MCF 10A (cell line): ENCODE measurements at regions of chr14 and their contacts with region 1.

Region 1: DNA sequence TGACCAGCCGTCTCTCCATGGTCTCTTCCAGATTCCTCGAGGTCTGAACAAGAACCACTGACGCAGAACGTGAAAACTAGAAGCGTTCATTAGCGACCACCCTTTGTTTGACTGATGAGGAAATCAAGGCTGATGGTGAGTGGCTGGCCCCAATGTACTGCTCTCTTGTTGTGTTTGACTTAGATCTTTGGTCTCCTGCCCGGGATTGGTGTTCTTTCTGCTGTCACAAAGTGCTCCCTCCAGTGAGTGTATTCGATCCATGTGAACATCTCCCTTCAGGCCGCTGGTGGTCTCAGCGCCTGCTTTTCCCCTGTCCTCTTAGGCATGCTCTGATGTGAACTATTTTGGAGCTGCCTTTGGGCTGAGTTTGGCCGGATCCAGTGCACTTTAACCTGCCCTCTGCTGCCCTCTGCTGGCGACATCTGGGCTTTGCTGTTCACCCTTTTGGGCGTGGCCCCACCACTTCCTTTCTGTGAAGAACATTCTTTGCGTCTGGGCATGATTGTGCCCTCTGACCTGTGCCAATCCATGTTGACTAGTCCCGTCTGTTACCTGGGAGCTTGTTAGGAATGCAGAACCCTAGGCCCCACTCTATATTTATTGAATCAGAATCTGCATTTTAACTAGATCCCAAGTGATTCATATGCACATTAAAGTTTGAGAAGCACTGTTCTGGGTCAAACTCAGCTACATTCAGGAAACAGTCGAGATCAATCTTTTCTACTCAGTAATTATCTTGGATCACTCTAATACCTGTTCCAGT is 279.2 kb downstream of the TTC6 start:
- DNase-seq: peak; percentile 83
- H3K4me3 Mint-ChIP-seq: no peak overlapping the region
- H3K27ac Mint-ChIP-seq: no peak overlapping the region
- H3K4me1 Mint-ChIP-seq: peaks cover 22% of the 10 kb centered on the region
- H3K27me3 Mint-ChIP-seq: no peaks in the 10 kb centered on the region
- CTCF ChIP-seq: peak; percentile 77

Region 2: DNA sequence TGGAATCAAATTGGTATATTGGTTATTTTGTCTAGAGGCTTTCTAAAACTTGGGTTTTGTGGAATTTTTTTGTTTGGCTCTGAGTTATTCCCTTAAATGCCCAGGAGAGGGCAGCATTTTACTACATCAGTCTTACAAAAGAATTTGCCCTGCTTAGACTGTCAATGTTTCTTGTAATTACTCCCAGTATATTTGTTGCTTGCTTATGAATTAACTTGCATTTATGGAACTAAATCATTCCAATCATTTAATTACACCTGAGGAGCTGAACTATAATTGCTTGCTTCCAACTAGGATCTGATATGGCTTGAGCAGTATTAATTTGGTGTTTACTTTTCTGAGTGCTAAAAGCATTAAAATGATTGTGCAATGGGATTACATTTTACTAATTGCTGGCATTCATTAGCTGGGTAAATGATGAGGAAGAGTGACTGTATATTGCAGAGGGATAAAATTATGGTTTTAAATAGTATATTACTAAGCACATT is 628.1 kb before region 1 on chr14:
- CTCF ChIA-PET with region 1: interaction called, 35 read pairs
- POLR2A ChIA-PET with region 1: interaction called, 3 read pairs
- intact Hi-C with region 1: loop called (anchors 1 kb)
- DNase-seq: peak; percentile 64
- H3K4me3 Mint-ChIP-seq: no peak overlapping the region
- H3K27ac Mint-ChIP-seq: no peak overlapping the region
- H3K4me1 Mint-ChIP-seq: no peaks in the 10 kb centered on the region
- H3K27me3 Mint-ChIP-seq: no peaks in the 10 kb centered on the region
- CTCF ChIP-seq: peak; percentile 63

Region 3: DNA sequence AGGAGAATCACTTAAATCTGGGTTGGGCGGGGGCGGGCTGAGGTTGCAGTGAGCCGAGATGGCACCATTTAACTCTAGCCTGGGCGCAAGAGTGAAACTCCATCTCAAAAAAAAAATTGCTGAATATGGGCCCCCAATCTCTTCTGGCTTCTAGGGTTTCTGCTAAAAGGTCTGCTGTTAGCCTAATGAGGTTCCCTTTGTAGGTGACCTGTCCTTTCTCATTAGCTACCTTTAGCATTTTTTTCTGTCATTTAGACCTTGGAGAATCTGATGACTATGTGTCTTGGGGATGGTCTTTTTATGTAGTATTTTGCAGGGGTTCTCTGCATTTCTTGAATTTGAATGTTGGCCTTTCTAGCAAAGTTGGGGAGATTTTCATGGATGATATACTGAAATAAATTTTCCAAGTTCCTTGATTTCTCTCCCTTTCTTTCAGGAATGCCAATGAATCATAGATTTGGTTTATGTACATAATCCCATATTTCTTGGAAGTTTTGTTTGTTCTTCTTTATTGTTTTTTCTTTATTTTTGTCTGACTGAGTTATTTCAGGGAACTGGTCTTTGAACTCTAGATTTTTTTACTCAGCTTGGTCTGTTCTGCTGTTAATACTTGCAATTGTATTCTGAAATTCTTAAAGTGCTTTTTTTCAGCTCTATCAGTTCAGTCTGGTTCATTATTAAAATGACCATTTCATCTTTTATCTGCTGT is 97.7 kb before region 1 on chr14:
- CTCF ChIA-PET with region 1: no interaction called
- POLR2A ChIA-PET with region 1: no interaction called
- intact Hi-C with region 1: no loop called
- DNase-seq: no peak
- H3K4me3 Mint-ChIP-seq: no peak overlapping the region
- H3K27ac Mint-ChIP-seq: no peak overlapping the region
- H3K4me1 Mint-ChIP-seq: no peaks in the 10 kb centered on the region
- H3K27me3 Mint-ChIP-seq: no peaks in the 10 kb centered on the region
- CTCF ChIP-seq: no peak

Region 4: GRCh38 chr14:37890095-37890494 is 15.5 kb after region 1 on chr14:
- CTCF ChIA-PET with region 1: interaction called, 14 read pairs
- POLR2A ChIA-PET with region 1: no interaction called
- intact Hi-C with region 1: no loop called
- DNase-seq: no peak
- H3K4me3 Mint-ChIP-seq: no peak overlapping the region
- H3K27ac Mint-ChIP-seq: no peak overlapping the region
- H3K4me1 Mint-ChIP-seq: no peaks in the 10 kb centered on the region
- H3K27me3 Mint-ChIP-seq: no peaks in the 10 kb centered on the region
- CTCF ChIP-seq: no peak

Region 5: GRCh38 chr14:38125481-38126037 is 250.9 kb after region 1 on chr14:
- CTCF ChIA-PET with region 1: no interaction called
- POLR2A ChIA-PET with region 1: no interaction called
- intact Hi-C with region 1: no loop called
- DNase-seq: no peak
- H3K4me3 Mint-ChIP-seq: no peak overlapping the region
- H3K27ac Mint-ChIP-seq: no peak overlapping the region
- H3K4me1 Mint-ChIP-seq: no peaks in the 10 kb centered on the region
- H3K27me3 Mint-ChIP-seq: no peaks in the 10 kb centered on the region
- CTCF ChIP-seq: no peak